ENCODE measurements at regions of chr6 and their contacts with region 1.

Region 1: DNA sequence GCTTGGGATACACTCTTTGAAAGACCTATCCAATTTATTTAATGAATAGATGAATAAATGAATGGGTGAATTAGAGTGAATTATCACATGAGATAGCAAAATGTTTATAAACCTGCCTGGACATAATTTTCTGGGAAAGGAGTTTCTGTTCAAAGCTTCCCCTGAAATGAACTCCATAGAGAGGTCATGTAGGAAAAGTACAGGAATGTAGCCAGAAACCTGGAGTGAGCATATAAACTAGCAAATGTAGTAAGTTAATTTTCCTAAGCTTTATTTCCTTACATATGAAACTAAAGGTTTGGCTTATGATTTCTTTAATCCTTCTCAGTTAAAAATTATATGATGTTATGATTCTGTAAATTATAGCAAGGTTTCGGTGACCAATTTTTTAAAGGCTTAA is 380.3 kb upstream of the RSPO3 start:
- DNase-seq: no peak
- H3K4me3 ChIP-seq: no peak overlapping the region
- H3K27ac ChIP-seq: no peak overlapping the region
- H3K4me1 ChIP-seq: no peaks in the 10 kb centered on the region
- H3K27me3 ChIP-seq: no peaks in the 10 kb centered on the region
- CTCF ChIP-seq: no peak
- POLR2A ChIP-seq: no peak

Region 2: GRCh38 chr6:125699591-125699990 is 1038.6 kb before region 1 on chr6:
- intact Hi-C with region 1: loop called (anchors 10 kb)
- DNase-seq: no peak
- H3K4me3 ChIP-seq: no peak overlapping the region
- H3K27ac ChIP-seq: no peak overlapping the region
- H3K4me1 ChIP-seq: no peaks in the 10 kb centered on the region
- H3K27me3 ChIP-seq: no peaks in the 10 kb centered on the region
- CTCF ChIP-seq: no peak
- POLR2A ChIP-seq: no peak

Region 3: GRCh38 chr6:126803769-126804168 is 65.6 kb after region 1 on chr6:
- intact Hi-C with region 1: loop called (anchors 2 kb)
- DNase-seq: no peak
- H3K4me3 ChIP-seq: no peak overlapping the region
- H3K27ac ChIP-seq: no peak overlapping the region
- H3K4me1 ChIP-seq: no peaks in the 10 kb centered on the region
- H3K27me3 ChIP-seq: no peaks in the 10 kb centered on the region
- CTCF ChIP-seq: no peak
- POLR2A ChIP-seq: no peak